ENCODE measurements at regions of chr18 and their contacts with region 1.

Region 1: DNA sequence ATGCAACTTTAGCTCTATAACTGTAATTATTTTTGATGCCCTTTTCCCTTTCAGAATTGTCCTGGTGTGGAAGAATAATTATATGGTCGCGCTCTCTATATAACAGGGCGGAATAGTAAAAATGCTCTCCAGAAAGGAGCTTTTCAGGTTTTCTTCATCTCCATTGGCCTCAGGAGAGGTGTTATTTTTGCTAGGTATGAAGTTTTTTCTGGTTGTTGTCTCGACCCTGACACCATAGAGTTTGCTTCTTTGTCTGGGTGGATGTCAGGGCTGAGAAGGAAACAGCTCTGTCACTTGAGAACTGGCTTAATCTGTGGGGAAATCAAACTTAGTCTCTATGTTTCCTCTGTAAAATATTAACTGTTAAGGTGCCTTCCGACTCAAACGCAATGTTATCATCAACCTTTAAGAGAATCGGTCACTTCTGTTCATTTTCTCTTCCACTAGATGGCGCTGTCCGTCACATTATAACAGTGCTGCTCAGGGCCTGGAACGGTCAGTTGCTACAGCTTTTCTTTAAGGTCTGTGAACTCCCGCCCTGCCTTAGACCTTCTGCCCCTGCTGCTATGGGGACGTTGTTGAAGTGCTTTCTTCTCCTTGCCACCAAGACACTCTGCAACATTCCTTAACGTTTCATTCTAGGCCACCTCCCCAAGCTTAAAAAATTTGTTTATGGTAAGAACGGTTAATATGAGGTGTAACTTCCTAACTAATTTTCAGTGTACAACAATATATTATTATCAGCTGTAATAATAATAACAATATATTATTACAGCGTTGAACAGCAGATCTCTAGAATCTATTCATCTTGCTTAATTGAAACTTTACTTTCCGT is 23.8 kb upstream of the SERPINB12 start:
- DNase-seq: no peak
- ATAC-seq: peak; percentile 61 to 85 (median 66)
- H3K4me3 ChIP-seq: no peak overlapping the region
- H3K27ac ChIP-seq: no peak overlapping the region
- H3K4me1 ChIP-seq: no peaks in the 10 kb centered on the region
- H3K27me3 ChIP-seq: no peaks in the 10 kb centered on the region
- CTCF ChIP-seq: peak; percentile 72

Region 2: GRCh38 chr18:63378919-63379638 is 139.3 kb before region 1 on chr18:
- intact Hi-C with region 1: no loop called
- DNase-seq: no peak
- ATAC-seq: no peak
- H3K4me3 ChIP-seq: no peak overlapping the region
- H3K27ac ChIP-seq: no peak overlapping the region
- H3K4me1 ChIP-seq: no peaks in the 10 kb centered on the region
- H3K27me3 ChIP-seq: no peaks in the 10 kb centered on the region
- CTCF ChIP-seq: no peak

Region 3: DNA sequence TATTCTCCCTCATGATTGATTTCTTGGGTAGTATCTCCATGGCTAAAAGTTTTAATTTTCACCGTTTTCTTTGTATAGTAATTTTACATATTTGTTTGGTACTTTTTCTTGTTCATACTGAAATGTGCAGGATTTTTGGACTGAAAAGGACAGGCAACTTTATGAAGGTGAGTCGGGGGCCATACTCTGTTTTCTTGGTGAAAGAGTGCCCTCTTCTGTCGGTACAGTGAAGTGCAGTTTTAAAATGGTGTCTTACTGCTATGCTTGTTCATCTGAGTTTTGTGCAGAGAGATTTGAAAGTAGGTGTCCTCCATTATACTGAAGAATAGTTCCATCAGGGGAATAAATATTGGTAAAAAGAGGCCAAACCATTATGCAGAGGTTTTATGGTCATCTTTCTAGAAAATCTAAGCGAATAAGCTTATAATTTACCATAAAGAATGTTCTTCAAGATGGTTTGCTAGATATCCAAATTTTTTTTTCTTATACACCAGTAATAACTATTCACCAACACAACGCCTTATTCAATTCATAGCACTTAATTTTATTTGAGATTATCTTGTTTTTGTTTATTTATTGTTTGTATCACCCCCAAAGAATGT is 60.1 kb after region 1 on chr18:
- intact Hi-C with region 1: loop called in 1 of 2 experiments (anchors 5 kb)
- DNase-seq: no peak
- ATAC-seq: no peak
- H3K4me3 ChIP-seq: no peak overlapping the region
- H3K27ac ChIP-seq: no peak overlapping the region
- H3K4me1 ChIP-seq: no peaks in the 10 kb centered on the region
- H3K27me3 ChIP-seq: no peaks in the 10 kb centered on the region
- CTCF ChIP-seq: peak; percentile 52

Region 4: DNA sequence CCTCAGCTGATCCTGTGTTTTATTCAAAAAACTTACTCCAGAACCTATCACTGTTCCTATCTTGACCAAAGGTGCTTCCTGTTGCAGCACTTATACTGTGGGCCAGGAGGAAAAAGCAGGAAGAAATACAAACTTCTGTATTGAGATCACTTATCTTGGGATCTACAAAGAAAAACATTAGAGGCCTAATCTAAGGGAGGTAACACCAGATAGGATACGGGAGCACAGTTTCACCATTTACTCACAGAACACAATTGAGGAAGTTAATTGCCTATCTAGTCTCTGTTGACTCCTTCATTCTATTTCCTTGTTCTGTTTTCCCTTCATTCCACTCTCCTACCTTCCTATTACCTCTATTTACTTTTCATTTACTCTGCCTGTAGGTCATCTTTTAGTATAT is 917.7 kb after region 1 on chr18:
- intact Hi-C with region 1: no loop called
- DNase-seq: no peak
- ATAC-seq: no peak
- H3K4me3 ChIP-seq: no peak overlapping the region
- H3K27ac ChIP-seq: no peak overlapping the region
- H3K4me1 ChIP-seq: no peaks in the 10 kb centered on the region
- H3K27me3 ChIP-seq: no peaks in the 10 kb centered on the region
- CTCF ChIP-seq: no peak

Measured in psoas muscle (tissue), 8 donors.